ENCODE measurements at regions of chr20 and their contacts with region 1.

Region 1: DNA sequence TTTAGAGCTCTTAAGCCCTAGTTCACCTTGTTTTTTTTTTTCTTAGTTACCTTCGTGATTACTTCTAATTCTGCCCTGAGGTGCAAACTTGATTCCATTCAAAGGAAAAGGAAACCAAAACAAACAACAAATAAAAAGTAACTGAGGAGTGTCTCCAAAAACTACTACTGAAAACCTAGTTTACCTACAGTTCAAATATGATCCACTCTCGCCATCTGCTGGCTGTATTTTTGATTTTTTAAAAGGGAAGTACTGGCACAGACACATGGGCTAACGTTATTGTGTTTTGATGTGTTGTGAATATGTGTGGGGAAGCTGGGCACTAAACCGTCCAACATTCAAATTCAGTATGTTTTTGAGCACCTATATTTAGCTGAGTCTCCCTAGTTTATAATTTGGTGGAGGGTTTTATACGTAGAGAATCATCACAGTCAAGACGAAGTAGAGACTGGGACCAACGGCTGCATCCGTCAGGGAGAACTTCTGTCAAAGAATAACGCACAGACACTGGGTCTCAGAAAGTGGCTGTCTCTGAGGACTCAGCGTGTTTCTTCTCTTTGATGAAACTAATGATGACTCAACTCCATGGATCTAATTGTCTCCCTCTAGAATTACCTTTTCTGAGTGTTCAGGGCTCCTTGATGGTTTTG is 373.5 kb upstream of the BTBD3 start:
- DNase-seq: peak; percentile 85
- H3K4me3 ChIP-seq: no peak overlapping the region
- H3K27ac ChIP-seq: no peak overlapping the region
- H3K4me1 ChIP-seq: peaks cover 7% of the 10 kb centered on the region
- H3K27me3 ChIP-seq: no peaks in the 10 kb centered on the region
- CTCF ChIP-seq: peak; percentile 65

Region 2: DNA sequence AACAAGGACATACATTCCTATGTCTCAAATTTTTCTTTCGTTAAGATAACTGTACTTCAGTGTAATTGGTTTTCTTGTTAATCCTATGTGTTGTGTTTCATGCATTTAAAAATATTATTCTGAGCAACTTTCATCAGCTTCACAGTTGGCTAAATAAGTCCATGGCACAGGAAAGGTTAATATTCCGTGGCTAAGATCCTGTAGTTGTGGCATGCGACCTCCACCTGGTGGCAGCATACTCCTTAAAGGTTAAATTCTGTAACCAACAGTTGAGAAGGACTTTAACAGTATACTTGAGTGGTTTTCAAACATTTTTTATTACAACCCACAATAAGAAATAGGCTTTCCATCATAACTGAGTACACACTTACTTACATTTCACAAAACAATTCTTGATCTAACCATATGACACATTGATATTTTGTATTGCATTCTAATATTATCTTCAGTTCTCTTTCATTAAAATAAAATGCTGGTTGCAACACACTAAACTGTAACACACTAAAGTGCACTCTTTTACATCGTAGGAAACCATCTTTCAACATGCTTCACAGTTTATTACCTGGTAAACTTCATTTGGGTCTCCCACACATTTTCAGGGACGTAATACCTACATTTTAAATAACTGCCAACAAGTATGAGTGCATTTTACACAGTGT is 990.7 kb before region 1 on chr20:
- CTCF ChIA-PET with region 1: no interaction called
- POLR2A ChIA-PET with region 1: no interaction called
- intact Hi-C with region 1: loop called (anchors 2 kb)
- DNase-seq: peak; percentile 86
- H3K4me3 ChIP-seq: no peak overlapping the region
- H3K27ac ChIP-seq: no peak overlapping the region
- H3K4me1 ChIP-seq: peaks cover 28% of the 10 kb centered on the region
- H3K27me3 ChIP-seq: no peaks in the 10 kb centered on the region
- CTCF ChIP-seq: peak; percentile 89

Region 3: DNA sequence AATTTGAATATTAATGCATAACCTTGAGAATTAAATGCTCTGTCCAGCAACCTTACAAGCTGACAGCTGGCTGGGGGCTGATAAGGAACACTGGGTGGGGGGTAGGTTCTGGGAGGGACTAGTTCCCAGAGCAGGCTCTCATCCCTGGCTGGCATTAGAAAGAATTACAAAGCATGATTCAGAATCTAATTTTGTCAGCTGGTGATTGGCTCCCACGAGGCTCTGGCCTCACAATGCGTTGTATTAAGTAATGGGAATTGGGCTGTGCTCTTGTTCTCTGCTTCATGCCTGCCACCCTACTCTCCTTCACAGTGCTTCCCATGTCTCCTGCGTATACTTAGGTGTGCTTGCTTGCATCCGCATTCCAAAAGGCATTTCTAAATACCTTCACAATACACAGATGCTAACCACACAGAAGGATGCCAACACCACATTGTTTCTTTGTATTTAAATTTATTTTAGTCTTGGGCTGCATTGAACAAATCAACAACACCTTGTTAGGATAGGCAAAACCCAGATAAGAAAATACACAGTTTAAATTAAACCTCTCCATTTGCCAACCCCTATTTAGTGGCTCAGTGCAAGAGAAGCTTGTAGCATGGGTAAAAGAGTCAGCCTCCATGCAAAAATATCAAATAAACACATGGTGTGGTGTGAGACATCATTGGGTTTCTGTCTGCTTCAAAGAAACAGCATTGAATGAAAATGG is 435.9 kb before region 1 on chr20:
- CTCF ChIA-PET with region 1: no interaction called
- POLR2A ChIA-PET with region 1: no interaction called
- intact Hi-C with region 1: loop called (anchors 10 kb)
- DNase-seq: no peak
- H3K4me3 ChIP-seq: no peak overlapping the region
- H3K27ac ChIP-seq: no peak overlapping the region
- H3K4me1 ChIP-seq: no peaks in the 10 kb centered on the region
- H3K27me3 ChIP-seq: no peaks in the 10 kb centered on the region
- CTCF ChIP-seq: no peak

Region 4: GRCh38 chr20:11204926-11205768 is 339.0 kb before region 1 on chr20:
- CTCF ChIA-PET with region 1: no interaction called
- POLR2A ChIA-PET with region 1: no interaction called
- intact Hi-C with region 1: loop called (anchors 10 kb)
- DNase-seq: peak; percentile 68
- H3K4me3 ChIP-seq: no peak overlapping the region
- H3K27ac ChIP-seq: peak overlapping the region; percentile 5
- H3K4me1 ChIP-seq: peaks cover 10% of the 10 kb centered on the region
- H3K27me3 ChIP-seq: no peaks in the 10 kb centered on the region
- CTCF ChIP-seq: peak; percentile 90

Region 5: DNA sequence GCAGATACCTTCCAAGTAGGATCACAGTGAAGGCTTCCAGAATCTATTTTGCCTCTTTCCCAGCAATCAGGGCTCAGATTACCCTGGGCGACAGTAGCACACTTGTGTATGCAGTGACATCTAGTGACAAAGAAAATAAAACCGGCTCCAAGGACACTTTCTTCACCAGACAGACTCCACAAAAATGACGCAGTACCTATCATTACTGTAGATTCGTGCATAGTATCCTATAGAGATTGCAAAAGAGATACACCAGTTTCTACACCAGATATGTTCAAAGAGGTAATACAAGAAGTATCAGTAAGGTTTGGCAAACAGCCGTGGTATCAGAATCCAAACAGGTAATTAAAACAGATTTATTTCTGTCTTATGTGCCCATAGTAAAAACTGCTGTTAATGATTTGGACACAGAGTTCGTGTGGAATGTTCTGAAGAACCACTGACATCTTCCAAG is 270.0 kb before region 1 on chr20:
- CTCF ChIA-PET with region 1: interaction called, 6 read pairs
- POLR2A ChIA-PET with region 1: no interaction called
- intact Hi-C with region 1: loop called (anchors 2 kb)
- DNase-seq: peak; percentile 82
- H3K4me3 ChIP-seq: no peak overlapping the region
- H3K27ac ChIP-seq: no peak overlapping the region
- H3K4me1 ChIP-seq: peaks cover 35% of the 10 kb centered on the region
- H3K27me3 ChIP-seq: no peaks in the 10 kb centered on the region
- CTCF ChIP-seq: peak; percentile 81

Region 6: GRCh38 chr20:11305406-11305805 is 238.7 kb before region 1 on chr20:
- CTCF ChIA-PET with region 1: no interaction called
- POLR2A ChIA-PET with region 1: no interaction called
- intact Hi-C with region 1: no loop called
- DNase-seq: no peak
- H3K4me3 ChIP-seq: no peak overlapping the region
- H3K27ac ChIP-seq: no peak overlapping the region
- H3K4me1 ChIP-seq: no peaks in the 10 kb centered on the region
- H3K27me3 ChIP-seq: no peaks in the 10 kb centered on the region
- CTCF ChIP-seq: no peak

Region 7: GRCh38 chr20:11438412-11438811 is 105.7 kb before region 1 on chr20:
- CTCF ChIA-PET with region 1: interaction called, 3 read pairs
- POLR2A ChIA-PET with region 1: no interaction called
- intact Hi-C with region 1: loop called (anchors 2 kb)
- DNase-seq: peak; percentile 65
- H3K4me3 ChIP-seq: no peak overlapping the region
- H3K27ac ChIP-seq: no peak overlapping the region
- H3K4me1 ChIP-seq: peaks cover 21% of the 10 kb centered on the region
- H3K27me3 ChIP-seq: no peaks in the 10 kb centered on the region
- CTCF ChIP-seq: 0 out of 2 replicates have a peak, but pooled peaks have one; percentile 37

Region 8: GRCh38 chr20:11511821-11512220 is 32.3 kb before region 1 on chr20:
- CTCF ChIA-PET with region 1: no interaction called
- POLR2A ChIA-PET with region 1: no interaction called
- intact Hi-C with region 1: no loop called
- DNase-seq: no peak
- H3K4me3 ChIP-seq: no peak overlapping the region
- H3K27ac ChIP-seq: no peak overlapping the region
- H3K4me1 ChIP-seq: no peaks in the 10 kb centered on the region
- H3K27me3 ChIP-seq: no peaks in the 10 kb centered on the region
- CTCF ChIP-seq: no peak